GM13976 (cell line): ENCODE measurements at regions of chr2 and their contacts with region 1.

Region 1: DNA sequence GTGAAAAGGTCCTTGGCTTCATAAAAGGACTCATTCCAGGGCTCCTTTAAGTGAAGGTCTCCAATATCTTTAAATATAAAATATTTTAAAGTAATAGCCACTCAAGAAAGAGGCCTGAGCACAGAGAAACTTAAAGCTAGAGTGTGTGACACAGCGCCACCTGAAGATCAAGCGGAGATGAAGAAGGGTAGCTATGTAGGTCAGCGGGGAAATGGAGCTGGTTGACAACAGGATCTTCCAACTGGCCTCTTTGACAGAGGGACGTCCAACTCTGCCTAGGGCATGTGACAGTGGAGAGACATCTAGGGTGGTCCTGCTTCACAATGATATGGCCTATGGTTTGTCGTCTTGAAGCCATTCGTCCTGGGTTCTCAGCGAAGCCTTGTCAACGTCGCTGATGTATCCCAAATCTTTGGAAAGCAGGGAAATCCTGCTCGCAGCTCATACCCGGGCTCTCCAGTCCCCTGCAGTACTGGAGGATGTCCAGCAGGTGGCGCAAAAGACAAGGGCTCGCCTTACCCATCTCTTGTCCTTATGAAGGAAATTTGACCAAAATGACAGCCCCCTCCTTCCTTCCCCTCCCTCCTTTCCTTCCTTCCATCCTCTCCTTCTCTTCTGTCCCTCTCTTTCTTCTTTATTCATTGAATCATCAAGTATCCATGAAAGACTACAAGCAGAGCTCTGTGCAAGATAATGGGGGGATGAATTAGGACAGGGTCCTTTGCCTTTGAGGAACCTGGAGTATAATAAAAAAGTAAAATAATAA is 59.6 kb downstream of the LONRF2 start:
- DNase-seq: peak; percentile 71
- CTCF ChIP-seq: peak; percentile 86

Region 2: GRCh38 chr2:99841749-99842148 is 421.0 kb before region 1 on chr2:
- in situ Hi-C with region 1: no loop called
- DNase-seq: no peak
- CTCF ChIP-seq: no peak

Region 3: DNA sequence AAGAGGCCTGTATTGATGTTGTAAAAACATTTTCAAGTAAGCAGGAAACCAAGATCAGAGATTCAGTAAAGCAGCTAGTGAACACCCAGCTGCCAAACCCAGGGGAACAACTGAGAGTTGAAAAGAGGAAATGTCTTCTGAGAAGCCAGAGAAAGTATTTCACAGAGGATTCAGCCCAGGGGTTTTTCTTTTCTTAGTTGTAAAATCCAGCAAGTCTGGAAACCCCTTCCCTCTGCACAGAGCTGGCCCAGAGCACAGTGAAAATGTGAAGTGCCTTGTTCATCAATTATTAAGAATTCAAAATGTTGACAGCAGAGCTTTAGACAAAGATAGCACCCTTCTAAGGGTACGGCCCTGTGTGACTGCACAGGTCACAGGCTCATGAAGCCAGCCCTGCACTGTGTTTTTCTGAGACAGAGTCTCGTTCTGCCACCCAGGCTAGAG is 148.7 kb before region 1 on chr2:
- in situ Hi-C with region 1: no loop called
- DNase-seq: peak; percentile 55
- CTCF ChIP-seq: no peak

Region 4: GRCh38 chr2:100381240-100381639 is 118.5 kb after region 1 on chr2:
- in situ Hi-C with region 1: loop called (anchors 10 kb)
- DNase-seq: peak; percentile 62
- CTCF ChIP-seq: peak; percentile 76

Region 5: GRCh38 chr2:100592226-100592625 is 329.5 kb after region 1 on chr2:
- in situ Hi-C with region 1: loop called (anchors 10 kb)
- DNase-seq: no peak
- CTCF ChIP-seq: no peak

Region 6: GRCh38 chr2:100984892-100985379 is 722.2 kb after region 1 on chr2:
- in situ Hi-C with region 1: loop called (anchors 25 kb)
- DNase-seq: peak; percentile 84
- CTCF ChIP-seq: peak; percentile 85